AG04449 (cell line): ENCODE measurements at regions of chr16 and their contacts with region 1.

Region 1: DNA sequence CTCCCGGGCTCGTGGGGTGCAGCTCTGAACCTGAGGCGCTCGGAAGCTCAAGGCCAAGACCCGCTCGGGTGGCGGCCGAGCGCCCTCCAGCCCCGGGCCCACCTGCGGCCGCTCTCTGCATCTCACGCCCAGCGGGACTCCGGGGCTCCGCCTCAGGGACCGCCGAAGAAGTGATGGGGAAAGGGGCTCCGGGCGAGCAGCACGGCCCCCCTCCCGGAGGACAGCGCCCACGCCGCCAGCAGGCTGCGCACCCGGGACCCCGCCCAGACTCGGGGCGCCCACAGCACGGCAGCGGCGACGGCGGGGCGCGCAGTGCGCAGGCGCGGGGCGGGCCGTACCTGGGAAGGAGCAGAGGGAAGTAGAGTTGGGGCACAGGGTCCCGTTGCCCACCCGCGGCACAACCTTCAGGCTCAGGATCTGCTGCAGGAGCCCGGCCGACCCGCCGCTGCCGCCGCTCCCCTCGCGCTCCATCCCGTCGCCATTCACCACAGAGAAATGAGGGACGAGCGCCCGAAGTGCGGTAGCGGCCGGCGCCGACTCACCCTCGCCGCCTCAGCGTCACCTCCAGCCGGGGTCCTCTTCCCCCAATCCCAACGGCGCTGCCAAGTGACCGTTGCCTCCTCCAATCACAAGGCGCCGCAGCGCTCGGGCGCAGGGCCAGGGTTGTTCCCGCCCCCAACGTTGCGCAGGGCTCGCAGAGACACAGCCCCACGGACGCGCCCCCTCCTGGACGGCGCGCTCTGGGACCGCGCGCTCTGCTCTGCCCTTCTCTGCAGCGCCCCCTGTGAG is at the start of gene TMEM170A:
- DNase-seq: peak; percentile 85
- H3K4me3 ChIP-seq: peak within 1 kb of the TSS; percentile 85
- CTCF ChIP-seq: peak; percentile 99

Region 2: DNA sequence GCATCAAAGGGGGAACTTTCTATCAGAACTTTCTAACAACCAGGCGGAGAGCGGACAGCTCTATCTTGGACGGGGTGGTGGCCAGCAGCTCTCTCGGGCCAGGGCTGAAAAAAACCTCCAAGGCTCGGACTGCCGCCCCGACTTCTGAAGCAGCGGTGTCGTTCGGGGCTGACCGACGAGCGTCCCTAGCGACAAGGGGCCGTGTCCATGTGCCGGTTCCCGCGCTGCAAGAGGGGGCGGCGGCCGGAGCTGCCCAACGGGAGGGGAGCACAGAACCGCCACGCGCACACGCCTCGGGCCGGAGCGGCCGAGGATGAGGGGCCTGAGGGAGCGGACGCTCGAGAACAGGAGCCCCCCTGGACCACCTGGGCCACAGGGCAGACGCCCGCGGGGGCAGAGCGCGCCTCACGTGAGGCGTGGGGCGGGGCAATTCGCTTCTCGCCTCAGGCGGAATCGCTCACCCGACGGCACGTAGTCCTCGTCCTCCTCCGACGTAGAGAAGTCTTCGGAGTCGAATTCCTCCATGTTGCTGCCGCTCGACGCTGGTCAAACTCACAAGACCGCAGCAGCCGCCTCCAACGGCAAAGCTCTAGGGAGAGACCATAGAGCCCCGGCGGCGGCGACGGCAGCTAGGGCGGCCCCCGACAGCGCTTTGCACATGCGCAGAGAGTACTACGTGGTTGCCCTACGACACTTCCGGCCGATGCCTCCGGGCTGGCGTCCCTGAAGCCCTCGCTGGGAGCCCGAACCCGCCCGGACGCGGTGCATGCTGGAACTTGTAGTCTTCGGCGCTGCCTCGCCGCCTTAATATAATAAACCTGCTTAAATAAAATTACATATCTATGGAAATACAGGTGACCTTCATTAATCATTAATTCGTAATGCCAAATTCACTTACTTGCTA is 31.2 kb before region 1 on chr16 and contains the start of gene CFDP1:
- CTCF ChIA-PET with region 1: interaction called, 11 read pairs
- POLR2A ChIA-PET with region 1: no interaction called
- DNase-seq: peak; percentile 44
- H3K4me3 ChIP-seq: peak within 1 kb of the TSS; percentile 94
- CTCF ChIP-seq: no peak

Region 3: GRCh38 chr16:75452464-75453190 is 11.7 kb before region 1 on chr16:
- CTCF ChIA-PET with region 1: interaction called, 35 read pairs
- POLR2A ChIA-PET with region 1: no interaction called
- DNase-seq: no peak
- H3K4me3 ChIP-seq: no peak overlapping the region
- CTCF ChIP-seq: no peak

Region 4: DNA sequence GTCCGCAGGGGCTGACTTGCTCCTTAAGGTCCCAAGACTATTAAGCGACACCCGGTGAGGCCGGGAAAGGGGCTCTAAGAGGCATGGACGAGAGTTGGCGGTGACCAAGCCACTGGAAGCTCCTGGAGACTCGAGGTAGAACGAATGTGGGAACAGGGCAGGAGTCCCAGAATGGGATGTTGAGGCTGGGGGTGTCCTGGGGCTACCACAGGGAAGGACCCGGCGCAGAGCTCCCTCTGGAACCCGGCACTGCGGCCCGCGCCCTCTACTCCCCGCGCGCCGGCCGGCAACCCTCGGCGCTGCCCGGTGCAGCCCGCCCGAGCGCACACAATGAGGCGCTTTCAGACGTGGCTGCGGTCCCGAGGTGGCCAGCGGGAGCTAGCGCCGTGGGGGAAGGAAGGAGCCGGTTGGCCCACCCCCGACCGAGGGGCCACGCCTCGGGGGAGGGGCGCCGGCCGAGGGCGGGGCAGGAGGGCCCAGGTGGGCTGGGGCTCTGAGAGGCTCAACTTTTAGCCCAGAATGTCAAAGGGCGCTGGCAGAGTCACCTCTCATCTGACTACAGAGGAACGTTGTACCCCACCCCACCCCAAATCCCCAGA is 30.9 kb after region 1 on chr16 and contains the start of gene CHST6:
- CTCF ChIA-PET with region 1: interaction called, 12 read pairs
- POLR2A ChIA-PET with region 1: no interaction called
- DNase-seq: no peak
- H3K4me3 ChIP-seq: peak within 1 kb of the TSS; percentile 40
- CTCF ChIP-seq: no peak

Region 5: DNA sequence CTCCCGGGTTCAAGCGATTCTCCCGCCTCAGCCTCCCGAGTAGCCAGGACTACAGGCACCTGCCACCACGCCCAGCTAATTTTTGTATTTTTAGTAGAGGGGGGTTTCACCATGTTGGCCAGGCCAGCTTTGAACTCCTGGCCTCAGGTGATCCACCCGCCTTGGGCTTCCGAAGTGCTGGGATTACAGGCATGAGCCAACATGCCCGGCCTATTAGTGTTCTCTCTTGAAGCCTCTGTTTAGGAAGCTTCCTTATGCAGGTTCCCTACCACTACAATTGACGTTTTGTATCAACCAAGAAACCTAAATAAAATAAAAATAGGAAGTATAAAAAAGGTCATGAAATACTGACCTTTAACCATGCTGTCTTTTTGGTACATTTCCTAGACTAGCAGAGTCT is 55.6 kb after region 1 on chr16:
- CTCF ChIA-PET with region 1: interaction called, 26 read pairs
- POLR2A ChIA-PET with region 1: interaction called, 3 read pairs
- DNase-seq: no peak
- H3K4me3 ChIP-seq: no peak overlapping the region
- CTCF ChIP-seq: no peak

Region 6: DNA sequence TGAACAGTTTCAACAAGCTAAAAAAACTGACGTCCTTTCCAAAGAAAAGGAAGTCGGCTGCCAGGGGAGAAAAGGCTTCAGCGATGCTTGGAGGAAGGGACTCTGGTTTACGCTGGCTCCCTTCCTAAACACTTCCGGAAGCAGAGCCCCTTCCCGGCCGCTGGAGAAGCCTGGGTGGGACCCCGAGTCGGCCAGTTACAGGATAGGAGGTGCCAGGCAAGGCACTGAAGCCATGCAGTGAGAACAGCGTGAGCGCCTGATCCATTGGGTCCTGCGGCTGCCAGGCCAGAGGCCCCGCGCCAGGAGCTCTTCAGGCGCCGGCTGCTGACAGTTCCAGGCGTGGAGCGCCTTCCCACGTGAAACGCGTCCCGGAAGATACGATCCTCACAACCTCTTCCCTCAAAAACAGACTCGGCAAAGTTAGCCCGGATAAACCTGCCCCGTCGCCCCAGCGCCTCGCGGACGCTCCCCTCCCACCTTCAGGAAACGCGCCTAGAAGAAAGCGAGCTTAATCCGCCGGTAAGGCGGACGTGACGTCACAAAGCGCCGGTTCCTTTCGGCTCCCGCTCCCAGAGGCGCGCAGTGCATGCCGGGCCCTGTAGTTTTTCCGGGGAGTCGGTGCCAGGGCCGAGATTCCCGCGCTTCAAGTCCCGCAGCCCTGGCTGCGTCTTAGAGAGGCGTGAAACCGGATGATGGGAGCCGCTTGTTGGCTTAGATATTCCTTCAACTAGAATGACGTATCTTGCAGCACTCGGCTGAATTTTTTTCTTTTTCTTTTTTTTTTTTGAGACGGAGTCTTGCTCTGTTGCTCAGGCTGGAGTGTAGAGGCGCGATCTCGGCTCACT is 158.7 kb after region 1 on chr16 and contains the start of gene ADAT1:
- CTCF ChIA-PET with region 1: interaction called, 61 read pairs
- POLR2A ChIA-PET with region 1: no interaction called
- DNase-seq: peak; percentile 87
- H3K4me3 ChIP-seq: peak within 1 kb of the TSS; percentile 86
- CTCF ChIP-seq: no peak

Region 7: DNA sequence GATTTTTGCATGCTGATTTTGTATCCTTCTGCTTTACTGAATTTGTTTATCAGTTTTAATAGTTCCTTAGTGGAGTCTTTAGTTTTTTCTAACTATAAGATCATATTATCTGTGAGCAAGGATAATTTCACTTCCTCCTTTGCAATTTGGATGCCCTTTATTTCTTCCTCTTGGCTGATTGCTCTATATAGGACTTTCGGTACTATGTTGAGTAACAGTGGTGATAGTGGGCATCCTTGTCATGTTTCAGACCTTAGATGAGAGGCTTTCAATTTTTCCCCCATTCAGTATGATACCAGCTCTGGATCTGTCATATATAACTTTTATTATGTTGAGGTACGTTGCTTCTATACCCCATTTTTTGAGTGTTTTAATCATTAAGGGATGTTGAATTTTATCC is 588.4 kb after region 1 on chr16:
- CTCF ChIA-PET with region 1: no interaction called
- POLR2A ChIA-PET with region 1: no interaction called
- DNase-seq: no peak
- H3K4me3 ChIP-seq: no peak overlapping the region
- CTCF ChIP-seq: no peak